Gastrocnemius medialis (tissue), 4 donors: ENCODE measurements at regions of chr1 and their contacts with region 1.

Region 1: GRCh38 chr1:220776720-220777326 is 9.9 kb upstream of the MTARC1 start:
- DNase-seq: peak; percentile 54 to 56
- ATAC-seq: peak; percentile 74 to 88
- H3K4me3 ChIP-seq: no peak overlapping the region
- H3K27ac ChIP-seq: no peak overlapping the region
- H3K4me1 ChIP-seq: peaks cover 0 to 13% of the 10 kb centered on the region in 2 donors
- H3K27me3 ChIP-seq: no peaks in the 10 kb centered on the region
- CTCF ChIP-seq: peak; percentile 77 to 94 (median 85)
- POLR2A ChIP-seq: no peak

Region 2: DNA sequence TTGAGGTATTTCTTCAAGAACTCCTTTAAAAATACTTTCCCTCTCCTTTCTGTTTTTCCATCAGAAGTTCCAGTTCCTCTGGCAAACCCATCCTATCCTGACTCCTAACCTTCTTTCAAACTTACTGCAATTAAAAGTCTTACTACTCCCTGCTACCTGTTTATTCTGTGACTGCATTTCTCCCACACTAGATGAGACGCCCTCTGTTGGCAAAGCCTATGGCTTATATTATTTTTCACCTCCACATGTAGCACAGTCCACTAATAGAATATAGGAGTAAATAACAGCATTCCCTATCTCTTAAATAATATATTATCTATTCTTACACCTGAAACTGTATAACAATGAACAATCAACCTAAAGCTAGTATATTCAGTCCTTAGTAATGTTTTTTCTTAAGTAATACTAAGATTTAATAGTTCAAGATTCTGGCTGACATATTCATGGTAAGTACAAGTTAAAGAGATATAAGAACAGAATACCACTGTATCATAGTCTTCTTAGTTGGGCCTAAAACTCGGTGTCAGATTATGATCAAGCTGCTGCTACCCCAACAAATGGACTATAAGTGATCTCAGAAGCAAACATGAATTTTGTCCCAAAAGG is 559.3 kb before region 1 on chr1:
- in situ Hi-C with region 1: no loop called
- intact Hi-C with region 1: loop called (anchors 5 kb)
- DNase-seq: no peak
- ATAC-seq: no peak
- H3K4me3 ChIP-seq: no peak overlapping the region
- H3K27ac ChIP-seq: no peak overlapping the region
- H3K4me1 ChIP-seq: peaks cover 3 to 16% of the 10 kb centered on the region in 2 donors
- H3K27me3 ChIP-seq: no peaks in the 10 kb centered on the region
- CTCF ChIP-seq: no peak
- POLR2A ChIP-seq: no peak

Region 3: DNA sequence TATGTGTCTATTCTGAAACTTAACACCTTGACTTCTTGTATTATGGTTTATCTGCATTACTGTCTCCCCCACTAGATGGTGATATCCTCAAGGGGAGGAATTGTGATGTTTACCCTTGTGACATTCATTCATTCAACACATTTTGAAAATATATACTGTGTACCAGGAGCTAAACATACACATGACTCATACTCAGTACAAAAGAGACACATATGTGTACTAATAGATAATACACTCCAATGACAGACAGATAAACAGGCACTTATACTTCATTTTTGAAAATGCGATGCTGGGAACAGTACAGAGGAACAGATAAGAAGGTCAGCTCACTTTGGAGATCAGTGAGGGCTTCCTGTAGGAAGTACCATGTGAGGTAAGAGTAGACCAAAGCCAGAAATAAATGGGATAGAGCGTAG is 495.7 kb before region 1 on chr1:
- in situ Hi-C with region 1: loop called in 2 of 4 experiments (anchors 25 kb)
- intact Hi-C with region 1: loop called (anchors 10 kb)
- DNase-seq: no peak
- ATAC-seq: no peak
- H3K4me3 ChIP-seq: no peak overlapping the region
- H3K27ac ChIP-seq: no peak overlapping the region
- H3K4me1 ChIP-seq: no peaks in the 10 kb centered on the region
- H3K27me3 ChIP-seq: peaks cover 0 to 4% (median 0%) of the 10 kb centered on the region in 3 donors
- CTCF ChIP-seq: peak in 4 of 5 experiments; percentile 16 to 62 (median 38)
- POLR2A ChIP-seq: no peak

Region 4: DNA sequence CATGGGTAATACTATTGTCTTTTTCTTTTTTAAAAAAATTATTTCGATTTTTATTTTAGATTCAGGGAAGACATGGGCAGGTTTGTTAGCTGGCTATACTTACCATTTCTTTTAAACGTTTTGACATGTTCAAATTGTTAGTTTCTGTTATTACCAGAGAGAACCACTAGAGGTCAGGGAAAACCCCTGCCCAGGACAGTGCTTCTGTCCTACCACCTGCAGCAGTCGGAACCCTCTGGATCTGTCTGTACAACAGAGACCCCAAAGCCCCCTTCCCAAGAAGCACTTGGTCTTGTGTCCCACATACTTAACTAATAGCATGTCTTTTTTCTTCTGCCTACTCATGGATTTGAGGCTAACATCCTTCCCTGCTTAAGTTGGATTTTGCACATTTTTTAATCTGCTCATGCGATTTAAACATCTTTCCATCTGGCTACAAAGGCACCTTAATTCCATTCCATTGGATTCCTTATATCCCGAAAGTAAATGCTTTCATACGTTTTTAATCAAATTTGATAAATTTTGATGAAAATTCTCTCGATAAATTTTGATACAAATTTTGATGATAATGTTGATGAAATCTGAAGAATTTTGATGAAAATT is 96.6 kb before region 1 on chr1:
- in situ Hi-C with region 1: loop called in 2 of 4 experiments (anchors 5 to 10 kb)
- intact Hi-C with region 1: loop called (anchors 1 kb)
- DNase-seq: no peak
- ATAC-seq: peak; percentile 47 to 71
- H3K4me3 ChIP-seq: no peak overlapping the region
- H3K27ac ChIP-seq: no peak overlapping the region
- H3K4me1 ChIP-seq: peaks cover 0 to 5% of the 10 kb centered on the region in 2 donors
- H3K27me3 ChIP-seq: no peaks in the 10 kb centered on the region
- CTCF ChIP-seq: peak; percentile 51 to 76 (median 66)
- POLR2A ChIP-seq: no peak

Region 5: DNA sequence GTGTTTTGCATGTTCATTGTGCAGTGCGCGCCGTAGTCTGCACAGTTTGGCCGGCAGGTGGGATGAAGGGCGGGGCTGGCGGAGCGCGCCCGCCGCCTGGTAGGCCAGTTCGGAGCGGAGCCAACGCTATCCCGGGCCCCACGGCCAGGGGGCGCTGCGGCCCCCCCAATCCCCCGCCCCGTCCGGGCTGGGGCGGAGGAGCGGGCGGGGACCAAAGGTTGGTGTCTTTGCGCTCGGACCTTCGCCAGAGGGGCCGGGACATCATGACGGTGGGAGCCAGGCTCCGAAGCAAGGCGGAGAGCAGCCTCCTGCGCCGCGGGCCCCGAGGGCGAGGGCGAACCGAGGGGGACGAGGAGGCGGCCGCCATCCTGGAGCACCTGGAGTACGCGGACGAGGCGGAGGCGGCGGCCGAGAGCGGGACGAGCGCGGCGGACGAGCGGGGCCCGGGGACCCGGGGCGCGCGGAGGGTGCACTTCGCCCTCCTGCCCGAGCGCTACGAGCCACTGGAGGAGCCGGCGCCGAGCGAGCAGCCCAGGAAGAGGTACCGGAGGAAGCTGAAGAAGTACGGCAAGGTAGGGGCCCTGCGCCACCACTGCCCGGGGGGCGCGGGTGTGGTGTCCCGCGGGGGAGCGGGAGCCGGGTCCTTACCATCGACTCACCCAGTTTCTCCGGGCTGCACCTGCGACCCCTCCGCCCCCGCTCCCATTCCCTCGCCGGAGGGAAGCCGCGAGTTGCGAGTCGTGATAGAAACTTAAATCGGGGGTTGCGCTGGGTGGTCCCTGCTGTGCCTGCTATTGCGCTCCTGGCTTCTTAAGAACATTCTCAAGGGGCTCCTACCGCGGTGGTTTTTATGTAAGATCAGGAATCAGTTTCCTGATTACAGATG is 86.4 kb before region 1 on chr1 and contains the start of gene C1orf115:
- in situ Hi-C with region 1: loop called in 3 of 4 experiments (anchors 5 to 10 kb)
- intact Hi-C with region 1: no loop called
- DNase-seq: peak; percentile 22 to 66
- ATAC-seq: peak; percentile 89 to 94
- H3K4me3 ChIP-seq: peak within 1 kb of the TSS; percentile 58 to 92 (median 68)
- H3K27ac ChIP-seq: peak within 1 kb of the TSS; percentile 14 to 71 (median 50)
- H3K4me1 ChIP-seq: peaks cover 0 to 10% of the 10 kb centered on the region in 2 donors
- H3K27me3 ChIP-seq: no peaks in the 10 kb centered on the region
- CTCF ChIP-seq: peak; percentile 85 to 96 (median 90)
- POLR2A ChIP-seq: no peak
- total RNA-seq, gene C1orf115: 2.2 to 6.7 (median 4.6) TPM